ENCODE measurements at regions of chr2 and their contacts with region 1.

Region 1: GRCh38 chr2:61878756-61879155 is 9.7 kb downstream of the CCT4 start:
- DNase-seq: no peak
- ATAC-seq: no peak

Region 2: GRCh38 chr2:61482621-61483020 is 396.1 kb before region 1 on chr2:
- intact Hi-C with region 1: loop called (anchors 5 kb)
- DNase-seq: no peak
- ATAC-seq: no peak

Measured in Right ventricle myocardium inferior (tissue), 1 donor.